Pancreas (tissue), 10 donors: ENCODE measurements at regions of chr9 and their contacts with region 1.

Region 1: DNA sequence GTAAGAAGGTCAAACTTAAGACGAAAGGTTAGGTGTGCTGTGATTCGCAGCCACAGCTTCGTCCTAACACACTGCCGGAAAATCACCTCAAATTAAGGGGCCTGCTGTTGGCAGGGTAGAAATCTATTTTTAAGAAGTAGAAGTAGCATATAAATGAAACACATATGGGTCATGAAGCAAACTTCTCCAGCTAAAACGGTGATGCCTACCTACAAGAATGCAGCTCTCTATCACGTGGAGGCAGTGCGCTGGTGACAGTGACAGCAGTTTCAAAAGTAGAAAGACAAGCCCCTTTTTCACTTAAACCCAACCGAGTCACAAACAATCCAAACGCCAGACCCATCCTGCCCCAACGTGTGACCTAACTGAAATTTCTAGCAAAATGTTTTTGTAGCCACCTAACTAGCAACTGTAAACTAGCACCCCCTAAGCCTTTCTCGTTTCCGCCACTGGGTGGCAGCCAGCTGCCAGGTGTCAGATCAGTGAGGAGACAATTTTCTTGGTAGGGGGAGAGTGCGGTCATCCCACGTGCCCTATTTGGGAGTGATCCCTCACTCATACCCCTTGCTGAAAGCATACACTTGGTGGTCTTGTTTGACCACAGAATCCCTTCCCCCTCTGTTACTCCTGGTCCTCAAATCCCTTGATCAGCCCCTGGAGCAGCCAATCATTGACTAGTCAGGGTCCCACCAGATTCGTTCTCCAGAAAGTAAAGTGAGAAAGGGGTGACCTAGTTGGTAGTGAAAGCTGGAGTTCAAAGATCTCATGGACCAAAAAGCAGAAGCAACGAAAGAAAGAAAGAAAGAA is 71.8 kb upstream of the MAMDC2 start:
- DNase-seq: peak; percentile 51 to 84 (median 74)
- ATAC-seq: peak; percentile 73 to 92 (median 87)
- H3K4me3 ChIP-seq: no peak overlapping the region
- H3K27ac ChIP-seq: no peak overlapping the region
- H3K4me1 ChIP-seq: no peaks in the 10 kb centered on the region
- H3K27me3 ChIP-seq: no peaks in the 10 kb centered on the region
- CTCF ChIP-seq: peak; percentile 44 to 77 (median 70)

Region 2: GRCh38 chr9:69822091-69822750 is 149.6 kb before region 1 on chr9:
- intact Hi-C with region 1: no loop called
- DNase-seq: no peak
- ATAC-seq: peak in 1 of 4 donors; percentile 13
- H3K4me3 ChIP-seq: no peak overlapping the region
- H3K27ac ChIP-seq: no peak overlapping the region
- H3K4me1 ChIP-seq: no peaks in the 10 kb centered on the region
- H3K27me3 ChIP-seq: no peaks in the 10 kb centered on the region
- CTCF ChIP-seq: no peak

Region 3: DNA sequence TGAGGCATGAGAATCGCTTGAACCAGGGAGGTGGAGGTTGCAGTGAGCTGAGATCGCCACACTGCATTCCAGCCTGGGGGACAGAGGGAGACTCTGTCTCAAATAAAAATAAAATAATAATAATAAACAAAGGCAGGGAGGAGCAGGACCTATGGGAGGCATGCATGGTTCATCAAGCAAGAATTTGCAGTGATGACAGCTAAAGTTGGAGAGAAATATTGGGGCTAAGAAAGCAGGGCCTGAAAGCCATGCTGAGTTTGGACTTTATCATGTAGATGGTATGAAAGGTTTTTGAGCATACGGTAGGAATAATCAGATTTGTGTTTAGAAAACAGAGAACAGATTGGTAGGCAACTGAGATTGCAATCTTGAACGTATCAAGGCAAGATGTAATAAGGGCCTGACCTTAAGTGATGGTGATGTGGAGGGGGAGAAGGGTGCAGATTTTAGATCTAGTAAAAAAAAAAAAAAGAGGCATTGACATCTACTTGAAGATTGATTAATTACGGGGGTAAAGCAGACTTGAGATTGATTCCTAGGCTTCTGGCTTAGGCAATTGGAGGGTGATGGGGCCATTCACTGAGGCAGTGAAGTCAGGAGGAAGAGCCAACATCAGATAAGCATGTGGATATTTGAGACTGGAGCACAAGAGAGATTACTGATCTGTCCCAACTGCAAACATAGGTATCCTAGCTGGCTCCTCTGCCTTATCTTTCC is 100.6 kb before region 1 on chr9:
- intact Hi-C with region 1: no loop called
- DNase-seq: no peak
- ATAC-seq: no peak
- H3K4me3 ChIP-seq: no peak overlapping the region
- H3K27ac ChIP-seq: no peak overlapping the region
- H3K4me1 ChIP-seq: no peaks in the 10 kb centered on the region
- H3K27me3 ChIP-seq: no peaks in the 10 kb centered on the region
- CTCF ChIP-seq: no peak

Region 4: DNA sequence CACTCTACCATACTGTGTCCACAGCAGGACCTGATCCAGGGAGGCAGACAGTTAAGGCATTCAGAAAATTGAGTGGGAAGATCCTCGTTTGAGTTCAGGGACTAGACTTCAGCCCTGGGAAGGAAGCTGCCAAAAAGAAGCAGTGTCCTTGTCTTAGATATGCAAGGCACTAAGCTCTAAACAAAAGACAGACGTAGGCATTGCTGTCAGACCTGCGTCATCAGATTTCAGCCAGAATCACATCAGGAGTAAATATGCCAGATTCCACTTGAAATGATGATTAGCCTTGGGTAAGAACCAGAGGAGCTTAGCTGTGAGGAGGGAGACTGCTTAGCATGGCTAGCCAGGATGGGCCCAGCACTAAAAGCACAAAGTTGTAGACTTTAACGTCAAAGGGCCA is 128.5 kb after region 1 on chr9:
- intact Hi-C with region 1: loop called in 1 of 3 experiments (anchors 10 kb)
- DNase-seq: no peak
- ATAC-seq: no peak
- H3K4me3 ChIP-seq: no peak overlapping the region
- H3K27ac ChIP-seq: no peak overlapping the region
- H3K4me1 ChIP-seq: no peaks in the 10 kb centered on the region
- H3K27me3 ChIP-seq: no peaks in the 10 kb centered on the region
- CTCF ChIP-seq: no peak

Region 5: GRCh38 chr9:70111042-70111602 is 139.3 kb after region 1 on chr9:
- intact Hi-C with region 1: loop called (anchors 2 to 10 kb)
- DNase-seq: peak; percentile 73 to 95 (median 84)
- ATAC-seq: peak; percentile 90 to 95 (median 92)
- H3K4me3 ChIP-seq: no peak overlapping the region
- H3K27ac ChIP-seq: no peak overlapping the region
- H3K4me1 ChIP-seq: no peaks in the 10 kb centered on the region
- H3K27me3 ChIP-seq: no peaks in the 10 kb centered on the region
- CTCF ChIP-seq: peak; percentile 81 to 91 (median 84)